ENCODE measurements at regions of chr6 and their contacts with region 1.

Region 1: GRCh38 chr6:136792410-136793262 is at the start of gene MAP3K5:
- DNase-seq: peak; percentile 96
- H3K4me3 Mint-ChIP-seq: peak within 1 kb of the TSS; percentile 89
- H3K27ac Mint-ChIP-seq: peak within 1 kb of the TSS; percentile 86
- H3K4me1 Mint-ChIP-seq: peaks cover 33% of the 10 kb centered on the region
- H3K27me3 Mint-ChIP-seq: no peaks in the 10 kb centered on the region
- total RNA-seq, gene MAP3K5: 9.4 to 9.7 TPM

Region 2: DNA sequence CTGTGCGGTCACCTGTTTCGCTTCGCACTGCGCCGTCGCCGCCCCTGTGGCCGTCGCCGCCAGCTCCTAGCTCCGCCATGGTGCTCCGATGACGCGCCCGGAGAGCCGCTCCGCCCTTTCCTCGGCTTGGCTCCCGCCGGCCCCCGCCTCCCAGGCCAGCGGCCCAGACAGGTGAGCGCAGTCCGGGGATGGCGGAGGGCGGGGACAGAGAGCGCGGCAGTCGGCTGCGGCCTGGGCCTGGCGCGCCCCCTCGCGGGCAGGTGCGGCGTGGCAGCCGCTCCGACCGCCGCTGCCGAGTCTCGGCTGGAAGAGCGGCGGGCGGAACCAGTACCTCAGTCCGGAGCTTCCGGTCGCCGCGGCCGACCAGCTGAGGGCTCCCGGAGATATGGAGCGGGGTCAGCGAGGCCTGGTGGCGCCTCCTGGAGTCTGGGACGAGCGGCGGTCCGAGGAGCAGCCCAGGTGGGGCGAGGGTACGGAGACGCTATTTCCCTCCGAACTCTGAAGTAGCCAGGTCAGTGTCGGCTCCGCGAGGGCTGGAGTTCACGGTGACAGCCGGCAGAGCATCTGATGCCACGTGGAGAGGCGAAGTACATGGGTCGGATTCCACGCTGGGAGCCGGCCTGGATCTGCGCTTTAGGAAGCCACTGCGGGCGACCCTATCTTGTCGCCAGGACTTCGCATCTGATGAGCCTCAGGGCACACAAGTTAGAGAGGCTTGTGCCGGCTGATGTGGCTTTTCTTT is 242.1 kb before region 1 on chr6 and contains the start of gene MAP7:
- CTCF ChIA-PET with region 1: no interaction called
- intact Hi-C with region 1: loop called (anchors 1 kb)
- DNase-seq: peak; percentile 76
- H3K4me3 Mint-ChIP-seq: peak within 1 kb of the TSS; percentile 54
- H3K27ac Mint-ChIP-seq: no peak within 1 kb of the TSS
- H3K4me1 Mint-ChIP-seq: peaks cover 4% of the 10 kb centered on the region
- H3K27me3 Mint-ChIP-seq: peaks cover 38% of the 10 kb centered on the region
- total RNA-seq, gene MAP7: 1.1 to 1.3 TPM

Region 3: DNA sequence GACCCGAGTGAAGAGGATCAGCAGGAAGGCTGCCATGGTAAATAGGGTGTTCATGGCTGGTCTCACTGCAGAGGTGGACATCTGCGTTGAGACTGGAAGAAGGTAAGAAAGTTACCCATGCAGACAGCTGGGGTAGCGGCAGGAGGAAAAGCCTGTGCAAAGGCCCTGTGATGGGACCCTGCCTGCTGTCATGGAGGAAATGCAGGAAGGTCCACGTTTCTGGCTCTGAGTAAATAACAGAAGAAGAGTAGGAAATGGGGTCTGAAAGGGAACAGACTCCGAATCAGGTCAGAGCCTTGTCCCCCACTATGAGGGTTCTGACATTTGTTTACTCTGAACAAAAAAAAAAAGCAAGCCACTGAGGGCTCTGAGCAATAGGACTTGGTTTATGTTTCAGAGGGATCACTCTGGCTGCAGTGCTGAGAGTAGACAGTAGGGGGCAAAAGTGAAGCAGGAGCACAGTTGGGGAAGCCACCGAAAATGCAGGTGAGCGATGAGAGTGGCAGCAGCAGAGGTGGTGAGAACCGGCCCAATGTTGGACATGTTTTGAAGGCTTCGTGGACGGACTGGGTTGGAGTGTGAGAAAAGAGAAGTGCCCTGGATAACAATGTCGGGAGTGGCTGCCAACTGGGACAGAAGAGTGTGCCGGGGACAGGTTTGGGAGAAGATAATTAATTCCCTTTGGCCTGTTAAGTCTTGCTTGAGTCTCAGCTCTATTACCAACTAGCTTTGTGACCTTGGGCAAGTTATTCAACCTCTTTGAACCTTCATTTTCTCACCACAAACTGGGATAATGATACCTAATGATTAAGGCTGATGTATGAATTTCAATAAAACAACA is 184.5 kb before region 1 on chr6:
- CTCF ChIA-PET with region 1: interaction called, 8 read pairs
- intact Hi-C with region 1: loop called (anchors 1 kb)
- DNase-seq: peak; percentile 92
- H3K4me3 Mint-ChIP-seq: no peak overlapping the region
- H3K27ac Mint-ChIP-seq: no peak overlapping the region
- H3K4me1 Mint-ChIP-seq: peaks cover 12% of the 10 kb centered on the region
- H3K27me3 Mint-ChIP-seq: no peaks in the 10 kb centered on the region

Region 4: GRCh38 chr6:136696238-136696637 is 96.4 kb before region 1 on chr6:
- CTCF ChIA-PET with region 1: interaction called, 7 read pairs
- intact Hi-C with region 1: loop called (anchors 1 kb)
- DNase-seq: no peak
- H3K4me3 Mint-ChIP-seq: no peak overlapping the region
- H3K27ac Mint-ChIP-seq: no peak overlapping the region
- H3K4me1 Mint-ChIP-seq: peaks cover 15% of the 10 kb centered on the region
- H3K27me3 Mint-ChIP-seq: no peaks in the 10 kb centered on the region

Region 5: DNA sequence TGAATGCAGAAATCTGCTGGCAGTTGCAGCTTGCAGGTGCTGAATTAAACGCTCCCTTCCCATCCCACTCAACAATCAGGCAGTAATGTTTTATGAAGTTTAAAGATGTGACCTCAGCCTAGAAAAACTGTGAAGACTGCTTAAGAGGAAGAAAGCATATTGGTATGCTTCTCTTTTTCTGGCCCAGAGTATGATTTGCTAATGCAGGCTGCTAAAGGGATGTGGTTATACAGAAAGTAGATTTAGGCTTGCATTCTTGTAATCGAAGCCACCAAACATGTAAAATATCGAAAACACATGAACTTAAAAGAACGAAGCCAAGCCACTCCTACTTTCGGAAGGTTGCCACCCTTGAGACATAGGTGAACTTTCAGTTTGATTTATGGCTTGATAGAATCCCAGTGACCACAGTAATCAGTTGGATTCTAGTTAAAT is 41.1 kb before region 1 on chr6:
- CTCF ChIA-PET with region 1: interaction called, 18 read pairs
- intact Hi-C with region 1: loop called (anchors 1 kb)
- DNase-seq: peak; percentile 55
- H3K4me3 Mint-ChIP-seq: peak overlapping the region; percentile 23
- H3K27ac Mint-ChIP-seq: peak overlapping the region; percentile 74
- H3K4me1 Mint-ChIP-seq: peaks cover 67% of the 10 kb centered on the region
- H3K27me3 Mint-ChIP-seq: no peaks in the 10 kb centered on the region

Region 6: DNA sequence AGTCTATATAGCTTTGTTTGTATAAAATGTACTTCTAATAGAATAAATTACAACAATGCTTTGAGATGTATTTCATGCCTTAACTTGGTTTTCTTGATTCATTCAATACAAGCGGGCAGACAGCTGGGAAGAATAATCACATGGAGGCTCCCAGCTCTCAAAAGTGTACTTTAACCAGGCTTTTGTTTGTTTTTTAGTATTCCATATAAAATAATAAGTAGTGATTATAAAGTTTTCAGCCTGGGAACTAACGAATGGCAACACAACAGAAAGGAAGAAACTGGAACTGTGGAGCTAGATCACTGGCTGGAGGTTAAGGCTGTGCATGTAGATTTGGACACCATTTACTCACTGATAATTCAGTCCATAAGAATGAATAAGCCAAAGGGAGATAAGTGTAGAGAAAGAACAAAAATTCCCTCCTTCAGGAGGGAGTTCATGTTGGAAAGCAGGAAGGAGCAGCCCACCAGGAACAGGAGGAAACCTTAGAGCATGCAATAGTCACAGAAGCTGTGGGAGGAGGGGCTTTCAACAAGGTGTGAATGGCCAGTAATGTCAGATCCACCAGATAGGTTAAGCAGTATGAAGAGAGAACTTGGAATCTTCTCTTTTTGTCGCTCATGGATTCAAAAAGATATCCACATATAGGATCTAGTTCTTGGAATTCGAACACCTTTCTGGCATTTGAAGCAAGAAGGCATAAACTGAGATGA is 88.3 kb after region 1 on chr6:
- CTCF ChIA-PET with region 1: no interaction called
- intact Hi-C with region 1: no loop called
- DNase-seq: no peak
- H3K4me3 Mint-ChIP-seq: no peak overlapping the region
- H3K27ac Mint-ChIP-seq: no peak overlapping the region
- H3K4me1 Mint-ChIP-seq: peaks cover 6% of the 10 kb centered on the region
- H3K27me3 Mint-ChIP-seq: no peaks in the 10 kb centered on the region

Region 7: GRCh38 chr6:136897071-136897470 is 104.4 kb after region 1 on chr6:
- CTCF ChIA-PET with region 1: no interaction called
- intact Hi-C with region 1: no loop called
- DNase-seq: no peak
- H3K4me3 Mint-ChIP-seq: no peak overlapping the region
- H3K27ac Mint-ChIP-seq: no peak overlapping the region
- H3K4me1 Mint-ChIP-seq: no peaks in the 10 kb centered on the region
- H3K27me3 Mint-ChIP-seq: no peaks in the 10 kb centered on the region

Region 8: GRCh38 chr6:136914947-136915346 is 122.3 kb after region 1 on chr6:
- CTCF ChIA-PET with region 1: no interaction called
- intact Hi-C with region 1: no loop called
- DNase-seq: no peak
- H3K4me3 Mint-ChIP-seq: no peak overlapping the region
- H3K27ac Mint-ChIP-seq: no peak overlapping the region
- H3K4me1 Mint-ChIP-seq: no peaks in the 10 kb centered on the region
- H3K27me3 Mint-ChIP-seq: peaks cover 11% of the 10 kb centered on the region

Region 9: GRCh38 chr6:136927292-136927691 is 134.7 kb after region 1 on chr6:
- CTCF ChIA-PET with region 1: interaction called, 5 read pairs
- intact Hi-C with region 1: loop called (anchors 1 kb)
- DNase-seq: peak; percentile 53
- H3K4me3 Mint-ChIP-seq: no peak overlapping the region
- H3K27ac Mint-ChIP-seq: no peak overlapping the region
- H3K4me1 Mint-ChIP-seq: peaks cover 13% of the 10 kb centered on the region
- H3K27me3 Mint-ChIP-seq: peaks cover 46% of the 10 kb centered on the region

Region 10: GRCh38 chr6:137133122-137133521 is 340.5 kb after region 1 on chr6:
- CTCF ChIA-PET with region 1: no interaction called
- intact Hi-C with region 1: no loop called
- DNase-seq: no peak
- H3K4me3 Mint-ChIP-seq: no peak overlapping the region
- H3K27ac Mint-ChIP-seq: no peak overlapping the region
- H3K4me1 Mint-ChIP-seq: no peaks in the 10 kb centered on the region
- H3K27me3 Mint-ChIP-seq: peaks cover 8% of the 10 kb centered on the region